ENCODE measurements at regions of chr22 and their contacts with region 1.

Region 1: DNA sequence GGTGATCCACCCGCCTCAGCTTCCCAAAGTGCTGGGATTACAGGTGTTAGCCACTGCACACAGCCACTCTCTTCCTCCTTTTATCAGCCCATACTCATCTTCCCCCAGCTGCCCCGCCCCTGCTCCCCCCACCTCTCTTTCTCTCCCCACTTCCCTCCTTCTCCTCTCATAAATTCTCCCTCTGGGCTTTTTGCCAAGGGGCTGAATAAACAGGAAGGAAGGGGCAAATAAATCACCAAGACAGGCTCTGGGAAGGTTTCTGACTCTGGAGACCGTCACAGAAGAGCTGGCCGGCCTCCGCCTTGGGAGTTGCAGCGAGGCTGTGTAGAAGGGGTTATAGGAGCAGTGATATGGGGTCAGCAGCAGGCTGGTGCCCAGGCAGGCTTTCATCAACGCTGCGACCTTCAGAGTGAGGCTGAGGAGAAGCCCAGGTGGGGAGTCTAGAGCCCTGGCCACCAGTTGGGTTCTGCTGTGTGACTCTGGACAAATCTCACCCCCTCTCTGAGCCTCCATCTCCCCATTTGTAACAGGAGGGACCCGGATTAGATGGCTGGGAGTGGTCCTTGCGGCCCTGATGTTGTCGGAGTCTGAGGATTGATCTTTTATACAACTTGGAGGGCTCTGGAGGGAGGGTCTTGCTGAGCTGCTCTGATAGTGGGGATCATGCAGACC is 62.6 kb upstream of the RASD2 start:
- DNase-seq: no peak

Region 2: DNA sequence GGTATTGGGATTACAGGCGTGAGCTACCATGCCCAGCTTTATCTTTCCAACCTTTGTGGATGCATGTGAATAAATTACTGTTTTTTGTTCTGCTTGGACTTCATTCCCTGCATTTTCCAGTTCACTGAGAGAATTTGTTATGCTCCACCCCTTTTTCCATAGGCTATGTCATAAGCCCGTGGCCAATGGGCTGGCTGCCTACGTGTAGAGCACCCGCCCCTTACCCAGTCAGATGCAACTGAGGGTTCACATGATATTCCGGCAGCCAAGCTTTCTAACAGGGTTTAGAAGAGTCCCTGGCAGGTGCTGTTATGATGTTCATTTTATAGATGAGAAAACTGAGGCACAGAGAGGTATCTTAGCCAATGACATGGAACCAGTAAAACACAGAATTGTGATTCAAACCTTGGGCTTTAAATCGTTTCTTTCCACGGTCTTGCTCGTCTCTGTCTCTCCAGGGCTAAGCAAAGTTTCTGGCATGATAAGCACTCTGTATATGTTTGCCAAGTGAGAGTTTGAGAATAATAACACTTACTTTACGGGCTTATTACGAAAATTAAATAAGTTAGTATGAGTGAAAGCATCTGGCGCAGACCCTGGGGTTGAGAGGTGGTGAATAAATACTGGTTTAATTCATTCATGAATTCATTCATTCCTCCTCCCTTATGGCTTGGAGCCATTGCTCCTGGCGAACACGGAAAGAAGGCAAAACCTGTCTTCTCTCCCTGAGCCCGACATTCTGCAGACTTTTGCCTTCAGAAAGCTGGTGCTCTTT is 20.2 kb after region 1 on chr22:
- intact Hi-C with region 1: no loop called
- DNase-seq: no peak

Region 3: GRCh38 chr22:35530700-35531099 is 52.7 kb after region 1 on chr22:
- intact Hi-C with region 1: loop called (anchors 5 kb)
- DNase-seq: no peak